Activated CD4-positive, alpha-beta memory T cell treated with anti-CD3 and anti-CD28 coated beads for 36 hours (primary cell): ENCODE measurements at regions of chr11 and their contacts with region 1.

Region 1: DNA sequence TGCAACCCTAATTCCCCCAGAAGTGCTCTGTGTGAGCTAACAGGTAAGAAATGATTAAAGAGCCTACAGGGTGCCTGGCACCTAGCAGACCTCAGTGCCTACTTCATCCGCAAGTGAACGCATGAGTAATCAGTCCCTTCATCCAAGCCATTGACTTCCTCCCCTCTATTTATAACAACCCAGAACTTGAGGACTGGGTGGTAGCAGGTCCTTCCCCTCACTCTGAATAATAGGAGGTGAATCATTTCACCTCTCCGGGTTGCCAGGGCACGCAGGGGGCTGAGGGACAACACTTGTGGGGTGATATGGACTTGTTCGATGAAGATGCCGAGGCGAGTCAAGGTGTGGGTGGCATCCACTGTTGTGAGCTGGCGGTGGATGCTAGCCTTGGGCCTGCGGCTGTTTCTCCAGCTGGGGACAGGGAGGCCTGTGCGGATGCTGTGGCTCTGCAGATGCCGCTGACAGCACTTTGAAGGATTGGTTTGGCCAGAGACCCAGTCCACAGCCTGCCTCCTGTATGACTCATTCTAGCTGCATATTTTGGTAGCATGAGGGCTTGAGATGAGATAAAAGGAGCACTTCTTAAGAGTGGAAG is 11.7 kb upstream of the SORL1-AS1 start:
- DNase-seq: peak; percentile 94
- H3K4me3 Mint-ChIP-seq: peak overlapping the region; percentile 63
- H3K27ac Mint-ChIP-seq: peak overlapping the region; percentile 99
- H3K4me1 Mint-ChIP-seq: peaks cover 98% of the 10 kb centered on the region
- H3K27me3 Mint-ChIP-seq: no peaks in the 10 kb centered on the region

Region 2: DNA sequence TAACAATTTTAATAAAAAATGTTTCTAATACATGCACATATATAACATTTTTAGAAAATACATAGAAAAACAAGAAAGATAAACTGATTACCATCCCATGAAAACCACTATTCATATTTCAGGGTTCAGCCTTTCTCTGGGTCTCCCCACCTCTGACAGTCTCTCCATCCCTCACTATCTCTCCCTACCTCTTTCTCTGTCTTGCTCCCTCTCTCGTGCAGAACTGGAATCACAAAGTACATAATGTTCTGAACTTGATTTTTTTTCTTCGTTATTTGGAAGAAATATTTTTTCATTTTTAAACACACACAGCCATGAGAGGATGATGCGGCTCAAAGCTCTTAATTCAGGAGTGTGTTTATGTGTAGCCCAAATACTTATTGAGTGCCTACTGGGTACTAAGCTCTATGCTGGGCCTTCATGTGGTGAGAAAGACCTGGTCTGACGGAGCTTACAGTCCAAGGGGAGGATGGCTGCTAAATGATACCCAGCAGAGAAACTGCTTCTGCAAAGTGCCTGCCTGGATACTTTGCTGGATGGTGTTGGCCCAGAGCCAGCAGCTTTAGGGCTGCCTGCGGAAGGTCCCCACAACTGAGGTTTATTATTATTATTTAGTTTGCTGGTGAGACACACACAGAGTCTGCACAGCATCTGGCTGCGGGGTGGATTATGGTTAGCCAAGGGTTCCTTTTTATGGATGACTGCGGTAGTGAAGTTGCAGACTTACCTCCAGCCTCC is 129.3 kb before region 1 on chr11:
- CTCF ChIA-PET with region 1: no interaction called
- POLR2A ChIA-PET with region 1: no interaction called
- intact Hi-C with region 1: no loop called
- DNase-seq: no peak
- H3K4me3 Mint-ChIP-seq: no peak overlapping the region
- H3K27ac Mint-ChIP-seq: no peak overlapping the region
- H3K4me1 Mint-ChIP-seq: peaks cover 24% of the 10 kb centered on the region
- H3K27me3 Mint-ChIP-seq: no peaks in the 10 kb centered on the region

Region 3: DNA sequence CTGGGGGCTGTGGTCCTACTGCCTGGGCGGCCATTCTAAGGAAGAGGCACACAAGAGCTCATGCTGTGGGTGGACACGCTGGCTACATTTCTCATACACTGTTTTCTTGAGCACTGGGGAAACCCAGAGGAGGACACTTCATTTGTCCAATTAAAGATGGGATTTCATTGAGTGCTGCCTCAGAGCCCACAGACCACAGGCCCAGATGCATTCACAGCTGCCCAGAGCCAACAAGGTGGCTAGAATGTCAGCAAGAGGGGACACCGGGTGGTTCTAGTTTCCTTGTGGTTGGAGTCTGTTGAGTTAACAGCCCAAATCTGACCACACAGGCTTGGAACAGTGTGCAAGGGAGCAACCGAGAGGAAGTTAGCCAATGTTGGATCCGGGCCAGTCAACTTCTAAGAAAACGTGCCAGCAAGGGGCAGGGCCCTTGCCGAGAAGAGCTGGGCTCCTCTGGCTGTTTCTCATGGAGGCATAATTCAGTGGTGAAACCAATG is 47.3 kb before region 1 on chr11:
- CTCF ChIA-PET with region 1: interaction called, 3 read pairs
- POLR2A ChIA-PET with region 1: interaction called, 3 read pairs
- intact Hi-C with region 1: loop called (anchors 1 kb)
- DNase-seq: peak; percentile 81
- H3K4me3 Mint-ChIP-seq: no peak overlapping the region
- H3K27ac Mint-ChIP-seq: peak overlapping the region; percentile 85
- H3K4me1 Mint-ChIP-seq: peaks cover 66% of the 10 kb centered on the region
- H3K27me3 Mint-ChIP-seq: no peaks in the 10 kb centered on the region

Region 4: DNA sequence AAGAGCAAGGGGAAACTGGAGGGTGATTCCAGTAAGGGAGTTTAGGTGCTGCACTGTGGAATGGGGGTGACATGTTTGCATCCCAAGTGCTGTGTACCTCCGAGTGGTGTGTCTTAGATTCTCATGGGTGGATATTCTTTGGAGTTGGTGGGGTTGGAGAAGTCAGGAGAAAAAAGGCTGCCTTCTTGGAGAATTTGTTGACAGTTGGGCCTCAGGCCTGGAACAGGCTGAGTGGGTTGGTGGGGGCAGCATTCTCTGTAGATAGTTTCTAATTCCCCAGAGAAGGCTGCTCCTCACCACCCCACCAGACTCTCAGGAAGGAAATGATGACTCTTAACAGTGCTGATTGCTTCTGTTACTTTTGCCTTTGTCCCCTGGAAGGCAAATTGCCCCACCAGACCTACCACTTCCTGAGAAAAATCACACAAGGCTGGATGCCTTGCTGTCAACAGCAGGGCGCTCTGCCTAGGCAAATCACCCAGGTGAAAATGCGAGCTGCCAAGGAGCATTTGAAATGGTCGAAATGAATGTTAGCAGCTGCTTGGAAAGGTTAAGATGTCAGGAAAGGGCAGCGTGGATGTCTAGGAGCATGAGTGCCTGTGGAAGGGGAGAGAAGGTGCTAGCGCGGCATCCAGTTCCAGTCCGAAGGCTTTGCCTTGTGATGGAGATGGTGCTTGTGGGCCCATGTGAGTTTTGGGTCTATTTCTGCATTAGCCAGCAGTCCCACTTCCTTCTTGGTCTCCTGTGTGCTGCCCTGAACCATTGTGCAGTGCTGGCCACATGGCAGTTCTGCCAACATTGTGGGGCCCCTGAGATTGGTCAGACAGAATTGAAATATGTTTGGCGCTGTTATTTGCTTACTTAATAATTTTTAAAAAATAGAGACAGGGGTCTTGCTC is 18.0 kb after region 1 on chr11:
- CTCF ChIA-PET with region 1: interaction called, 9 read pairs
- POLR2A ChIA-PET with region 1: interaction called, 3 read pairs
- intact Hi-C with region 1: loop called (anchors 1 kb)
- DNase-seq: peak; percentile 74
- H3K4me3 Mint-ChIP-seq: peak overlapping the region; percentile 75
- H3K27ac Mint-ChIP-seq: peak overlapping the region; percentile 96
- H3K4me1 Mint-ChIP-seq: peaks cover 47% of the 10 kb centered on the region
- H3K27me3 Mint-ChIP-seq: no peaks in the 10 kb centered on the region

Region 5: GRCh38 chr11:121534131-121535093 is 70.0 kb after region 1 on chr11:
- CTCF ChIA-PET with region 1: no interaction called
- POLR2A ChIA-PET with region 1: interaction called, 3 read pairs
- intact Hi-C with region 1: loop called (anchors 1 kb)
- DNase-seq: no peak
- H3K4me3 Mint-ChIP-seq: no peak overlapping the region
- H3K27ac Mint-ChIP-seq: no peak overlapping the region
- H3K4me1 Mint-ChIP-seq: peaks cover 51% of the 10 kb centered on the region
- H3K27me3 Mint-ChIP-seq: no peaks in the 10 kb centered on the region